ENCODE measurements at regions of chr3 and their contacts with region 1.

Region 1: GRCh38 chr3:68876112-68876713 is 56.1 kb downstream of the TAFA4 start:
- DNase-seq: no peak
- H3K4me3 Mint-ChIP-seq: no peak overlapping the region
- H3K27ac Mint-ChIP-seq: no peak overlapping the region
- H3K4me1 Mint-ChIP-seq: no peaks in the 10 kb centered on the region
- H3K27me3 Mint-ChIP-seq: peaks cover 13% of the 10 kb centered on the region

Region 2: GRCh38 chr3:66938338-66938963 is 1937.8 kb before region 1 on chr3:
- intact Hi-C with region 1: loop called (anchors 1 kb)
- DNase-seq: no peak
- H3K4me3 Mint-ChIP-seq: no peak overlapping the region
- H3K27ac Mint-ChIP-seq: no peak overlapping the region
- H3K4me1 Mint-ChIP-seq: no peaks in the 10 kb centered on the region
- H3K27me3 Mint-ChIP-seq: peaks cover 4% of the 10 kb centered on the region

Region 3: GRCh38 chr3:66971891-66972551 is 1904.2 kb before region 1 on chr3:
- intact Hi-C with region 1: loop called (anchors 1 kb)
- DNase-seq: peak; percentile 46
- H3K4me3 Mint-ChIP-seq: peak overlapping the region; percentile 68
- H3K27ac Mint-ChIP-seq: no peak overlapping the region
- H3K4me1 Mint-ChIP-seq: peaks cover 13% of the 10 kb centered on the region
- H3K27me3 Mint-ChIP-seq: peaks cover 24% of the 10 kb centered on the region

Region 4: DNA sequence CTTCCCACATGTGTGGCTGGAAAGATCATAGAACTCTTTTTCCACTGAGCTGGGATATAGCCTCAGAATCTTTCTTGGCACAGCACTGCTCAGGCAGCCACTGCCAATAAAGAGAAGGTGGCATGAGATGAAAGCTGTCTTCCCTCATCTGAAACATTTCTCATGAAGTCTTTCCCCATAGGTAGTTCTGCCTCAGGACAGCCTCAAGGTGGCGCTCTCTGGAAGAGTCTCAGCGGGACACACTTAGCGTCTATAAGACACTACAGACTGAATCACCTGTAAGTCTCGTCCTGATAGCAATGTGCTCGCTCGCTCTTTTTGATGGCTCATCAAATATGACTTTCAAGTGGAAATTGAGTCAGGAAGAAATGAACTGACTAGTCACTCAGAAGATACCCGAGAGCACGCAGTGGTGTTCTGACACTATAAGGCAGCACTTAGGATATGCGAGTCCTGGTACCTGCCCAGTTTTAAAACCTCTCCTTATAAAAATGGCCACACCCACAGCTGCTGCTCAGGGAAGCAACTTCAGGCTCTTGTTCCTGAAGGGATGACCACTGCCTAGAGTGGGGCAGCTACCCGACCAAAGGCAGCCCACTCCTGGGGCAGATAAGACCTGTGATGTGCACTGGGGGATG is 1491.3 kb before region 1 on chr3:
- intact Hi-C with region 1: loop called (anchors 2 kb)
- DNase-seq: no peak
- H3K4me3 Mint-ChIP-seq: no peak overlapping the region
- H3K27ac Mint-ChIP-seq: no peak overlapping the region
- H3K4me1 Mint-ChIP-seq: peaks cover 25% of the 10 kb centered on the region
- H3K27me3 Mint-ChIP-seq: no peaks in the 10 kb centered on the region

Region 5: GRCh38 chr3:68802111-68802870 is 73.9 kb before region 1 on chr3:
- intact Hi-C with region 1: no loop called
- DNase-seq: no peak
- H3K4me3 Mint-ChIP-seq: no peak overlapping the region
- H3K27ac Mint-ChIP-seq: no peak overlapping the region
- H3K4me1 Mint-ChIP-seq: no peaks in the 10 kb centered on the region
- H3K27me3 Mint-ChIP-seq: no peaks in the 10 kb centered on the region

Region 6: DNA sequence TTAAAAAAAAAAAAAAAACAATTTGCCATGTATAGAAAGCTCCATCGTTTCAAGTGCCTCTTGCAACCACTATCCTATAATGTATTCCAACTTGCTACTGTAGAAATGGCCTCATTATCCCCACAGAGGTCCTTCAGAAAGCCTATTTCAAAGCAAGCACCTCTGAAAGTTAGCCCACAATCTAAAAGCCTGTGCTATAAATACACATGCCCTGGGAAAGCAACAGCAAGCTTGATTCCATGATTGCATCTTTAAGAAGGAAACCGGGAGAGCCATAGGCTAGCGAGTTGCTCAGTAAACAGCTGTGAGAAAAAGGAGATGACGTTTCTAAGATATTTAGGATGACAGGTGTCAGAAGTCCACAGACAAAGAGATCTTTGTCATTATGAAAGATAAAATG is 27.9 kb after region 1 on chr3:
- intact Hi-C with region 1: no loop called
- DNase-seq: no peak
- H3K4me3 Mint-ChIP-seq: no peak overlapping the region
- H3K27ac Mint-ChIP-seq: no peak overlapping the region
- H3K4me1 Mint-ChIP-seq: no peaks in the 10 kb centered on the region
- H3K27me3 Mint-ChIP-seq: peaks cover 13% of the 10 kb centered on the region

Measured in activated T-helper 1 cell treated with anti-CD3 and anti-CD28 coated beads, Interleukin-12 subunit alpha, Interleukin-12 subunit beta, Interleukin-2, Interleukin-4 antibody, amounts not matched to agents 30 ng/mL and 10 ng/mL and 1 ng/mL, durations not matched to agents 14 hours and 24 hours and 36 hours (primary cell).